Activated naive CD4-positive, alpha-beta T cell treated with anti-CD3 and anti-CD28 coated beads for 36 hours (primary cell): ENCODE measurements at regions of chr10 and their contacts with region 1.

Region 1: DNA sequence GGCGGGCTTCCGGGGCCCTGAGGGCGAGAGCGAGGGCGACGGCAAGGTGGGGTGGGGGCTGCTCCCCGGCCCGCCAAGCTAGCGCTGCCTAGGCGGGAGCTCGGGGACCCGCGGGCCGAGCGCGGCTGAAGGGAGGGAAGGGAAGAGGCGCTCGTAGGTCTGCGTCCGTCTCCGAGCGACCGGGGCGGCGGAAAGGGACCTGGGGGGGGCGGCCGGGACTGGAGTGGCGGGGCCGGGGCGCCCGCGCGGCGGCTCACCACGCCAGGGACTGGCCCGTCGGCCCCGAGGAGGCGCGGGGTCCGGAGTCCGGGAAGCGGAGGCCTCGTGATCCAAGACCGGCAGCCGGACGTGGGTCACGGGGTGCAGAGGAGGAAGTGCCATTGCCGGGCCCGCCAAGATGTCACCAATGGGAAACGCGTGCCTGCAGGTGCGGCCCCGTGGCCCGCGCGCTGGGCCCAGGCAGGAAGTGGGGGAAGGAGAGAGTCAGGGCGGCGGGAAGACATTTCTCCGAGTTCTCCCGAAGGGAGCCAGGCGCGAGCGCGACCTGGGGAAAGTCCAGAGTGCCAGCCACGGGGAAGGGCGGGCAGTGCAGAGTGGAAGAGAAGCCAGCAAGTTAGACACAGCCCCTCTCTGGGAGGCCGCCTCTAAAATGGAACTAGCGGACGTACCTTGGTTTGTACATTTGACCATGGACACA is 11.9 kb downstream of the HNRNPF start:
- DNase-seq: peak; percentile 93
- H3K4me3 Mint-ChIP-seq: peak overlapping the region; percentile 89
- H3K27ac Mint-ChIP-seq: peak overlapping the region; percentile 99
- H3K4me1 Mint-ChIP-seq: peaks cover 75% of the 10 kb centered on the region
- H3K27me3 Mint-ChIP-seq: no peaks in the 10 kb centered on the region

Region 2: GRCh38 chr10:43361986-43362839 is 34.9 kb before region 1 on chr10:
- CTCF ChIA-PET with region 1: no interaction called
- intact Hi-C with region 1: loop called (anchors 1 kb)
- DNase-seq: peak; percentile 98
- H3K4me3 Mint-ChIP-seq: peak overlapping the region; percentile 95
- H3K27ac Mint-ChIP-seq: peak overlapping the region; percentile 96
- H3K4me1 Mint-ChIP-seq: peaks cover 23% of the 10 kb centered on the region
- H3K27me3 Mint-ChIP-seq: no peaks in the 10 kb centered on the region

Region 3: GRCh38 chr10:43407576-43408330 is 10.7 kb after region 1 on chr10:
- CTCF ChIA-PET with region 1: interaction called, 3 read pairs
- intact Hi-C with region 1: loop called (anchors 1 kb)
- DNase-seq: peak; percentile 94
- H3K4me3 Mint-ChIP-seq: peak overlapping the region; percentile 88
- H3K27ac Mint-ChIP-seq: peak overlapping the region; percentile 96
- H3K4me1 Mint-ChIP-seq: peaks cover 32% of the 10 kb centered on the region
- H3K27me3 Mint-ChIP-seq: no peaks in the 10 kb centered on the region

Region 4: DNA sequence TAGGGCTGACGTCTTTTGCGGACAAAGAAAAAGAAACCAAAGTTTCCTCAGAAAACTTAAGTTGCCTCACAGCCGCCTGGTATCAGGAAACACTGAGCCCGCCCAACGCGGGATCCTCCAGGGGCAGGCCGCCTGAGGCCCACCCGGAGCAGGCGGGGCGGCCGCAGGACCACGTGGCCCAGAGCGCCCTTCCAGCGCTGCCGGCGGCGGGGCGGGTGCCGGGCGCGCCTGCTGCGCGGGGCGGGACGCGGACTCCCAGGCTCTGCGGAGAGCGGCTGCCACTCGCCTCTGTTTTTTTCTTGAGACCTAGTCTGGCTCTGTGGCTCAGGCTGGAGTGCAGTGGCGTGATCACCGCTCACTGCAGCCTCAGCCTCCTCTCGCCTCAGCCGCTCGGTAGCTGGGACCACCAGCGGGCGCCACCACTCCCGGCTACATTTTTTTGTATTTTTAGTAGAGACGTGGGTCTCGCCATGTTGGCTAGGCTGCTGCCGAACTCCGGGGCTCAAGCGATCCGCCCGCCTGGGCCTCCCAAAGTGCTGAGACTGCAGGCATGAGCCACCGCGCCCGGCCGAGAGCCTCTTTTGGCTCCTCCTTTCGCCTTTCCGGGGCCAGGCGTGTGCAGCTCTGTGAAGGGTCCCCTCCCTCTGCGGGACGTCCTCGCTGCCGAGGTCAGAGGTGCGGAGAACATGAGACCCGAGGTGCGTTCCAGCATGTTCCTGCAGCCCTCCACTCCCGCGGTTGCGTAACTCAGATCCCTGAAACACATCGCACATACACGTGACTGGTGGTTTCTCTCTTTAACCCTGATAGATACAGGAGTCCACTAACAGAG is 23.5 kb after region 1 on chr10:
- CTCF ChIA-PET with region 1: interaction called, 3 read pairs
- intact Hi-C with region 1: loop called (anchors 1 kb)
- DNase-seq: peak; percentile 78
- H3K4me3 Mint-ChIP-seq: peak overlapping the region; percentile 87
- H3K27ac Mint-ChIP-seq: peak overlapping the region; percentile 95
- H3K4me1 Mint-ChIP-seq: peaks cover 35% of the 10 kb centered on the region
- H3K27me3 Mint-ChIP-seq: no peaks in the 10 kb centered on the region

Region 5: GRCh38 chr10:43436400-43437140 is 39.5 kb after region 1 on chr10 and contains the start of gene ZNF487:
- CTCF ChIA-PET with region 1: interaction called, 3 read pairs
- intact Hi-C with region 1: loop called (anchors 1 kb)
- DNase-seq: peak; percentile 90
- H3K4me3 Mint-ChIP-seq: peak within 1 kb of the TSS; percentile 84
- H3K27ac Mint-ChIP-seq: peak within 1 kb of the TSS; percentile 87
- H3K4me1 Mint-ChIP-seq: peaks cover 17% of the 10 kb centered on the region
- H3K27me3 Mint-ChIP-seq: no peaks in the 10 kb centered on the region
- total RNA-seq, gene ZNF487: 2.3 to 2.7 TPM

Region 6: DNA sequence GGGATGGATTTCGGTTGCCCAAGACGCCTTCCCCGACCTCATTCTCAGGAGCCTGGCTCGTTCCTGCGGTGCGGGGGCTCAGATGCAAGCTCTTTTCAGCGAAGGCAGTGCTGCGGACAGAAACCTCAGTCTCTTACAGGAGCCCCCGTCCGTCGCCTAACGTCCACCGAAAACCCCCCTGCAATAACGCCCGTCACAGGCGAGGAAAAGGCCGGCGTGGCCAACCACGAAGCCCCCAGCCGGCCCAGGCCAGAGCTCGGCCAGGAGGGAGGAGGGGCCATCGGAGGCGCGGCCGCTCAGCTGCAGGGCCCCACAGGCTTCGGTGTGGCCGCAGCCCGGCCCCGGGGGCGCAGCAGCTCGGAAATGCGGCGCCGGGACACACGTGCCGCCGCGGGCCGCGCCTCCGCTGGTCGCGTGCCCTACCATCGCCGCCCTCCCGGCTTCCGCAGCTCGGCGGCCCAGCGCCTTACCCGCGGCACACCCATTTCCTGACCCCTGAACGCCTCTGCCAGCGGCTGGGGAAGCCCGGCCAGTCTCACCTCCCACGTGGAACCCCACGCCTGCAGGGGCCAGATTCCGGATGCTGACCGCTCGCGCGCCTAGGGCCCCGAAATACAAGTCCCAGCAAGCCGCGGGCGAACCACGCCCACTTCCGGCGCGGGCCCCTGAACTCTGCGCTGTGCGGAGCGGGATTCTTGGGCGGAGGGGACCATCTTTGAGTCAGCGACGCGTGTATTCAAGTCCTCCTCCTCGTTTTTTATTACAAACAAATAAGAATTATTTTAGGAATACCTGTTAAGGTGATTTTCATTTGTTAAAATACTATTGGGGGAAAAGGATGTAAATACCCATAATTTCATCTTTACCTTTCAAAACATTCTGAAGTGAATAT is 177.2 kb after region 1 on chr10 and contains the start of gene ZNF239:
- CTCF ChIA-PET with region 1: no interaction called
- intact Hi-C with region 1: loop called (anchors 5 kb)
- DNase-seq: peak; percentile 90
- H3K4me3 Mint-ChIP-seq: peak within 1 kb of the TSS; percentile 77
- H3K27ac Mint-ChIP-seq: peak within 1 kb of the TSS; percentile 79
- H3K4me1 Mint-ChIP-seq: peaks cover 56% of the 10 kb centered on the region
- H3K27me3 Mint-ChIP-seq: no peaks in the 10 kb centered on the region
- total RNA-seq, gene ZNF239: 2.0 to 2.5 TPM

Region 7: DNA sequence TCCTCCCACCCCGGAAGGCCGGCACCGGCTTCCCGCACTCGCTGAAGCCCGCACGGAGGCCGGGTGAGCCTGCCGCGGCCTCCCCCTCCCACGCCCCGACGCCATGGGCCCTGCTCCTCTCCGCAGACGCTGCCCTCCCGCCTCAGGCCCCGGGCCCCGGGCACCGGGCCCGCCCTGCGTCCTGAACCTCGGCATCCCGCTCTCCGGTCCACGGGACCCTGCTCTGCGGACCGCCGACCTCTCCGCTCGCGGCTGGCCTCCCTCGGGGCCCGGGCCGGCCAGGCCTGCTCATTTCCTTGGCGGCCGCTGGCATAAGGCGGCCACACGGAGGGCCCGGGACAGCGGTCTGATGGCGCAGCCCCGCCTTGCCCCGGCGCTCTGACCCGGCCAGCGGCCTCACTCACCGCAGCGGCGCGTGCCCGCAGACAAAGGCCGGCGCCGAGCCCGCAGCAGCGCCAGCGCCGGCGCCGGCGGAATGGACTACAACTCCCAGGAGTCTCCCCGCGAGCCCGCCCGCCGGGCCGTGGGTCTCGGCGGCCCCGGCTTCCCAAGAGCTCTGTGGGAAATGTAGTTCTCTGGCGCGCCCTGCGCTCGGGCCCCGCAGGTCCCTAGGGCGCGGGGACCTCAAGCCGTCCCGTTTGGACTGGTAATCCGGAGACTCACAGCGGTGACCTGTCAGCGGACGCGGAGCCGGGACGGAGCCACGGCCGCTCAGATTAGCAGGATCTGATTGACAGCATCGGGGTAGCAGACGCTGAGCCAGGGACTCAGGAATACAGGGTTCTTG is 251.5 kb after region 1 on chr10 and contains the start of gene ZNF32:
- CTCF ChIA-PET with region 1: no interaction called
- intact Hi-C with region 1: loop called (anchors 5 kb)
- DNase-seq: peak; percentile 83
- H3K4me3 Mint-ChIP-seq: peak within 1 kb of the TSS; percentile 88
- H3K27ac Mint-ChIP-seq: peak within 1 kb of the TSS; percentile 86
- H3K4me1 Mint-ChIP-seq: peaks cover 18% of the 10 kb centered on the region
- H3K27me3 Mint-ChIP-seq: no peaks in the 10 kb centered on the region
- total RNA-seq, gene ZNF32: 17.8 to 17.9 TPM